ENCODE measurements at regions of chr16 and their contacts with region 1.

Region 1: GRCh38 chr16:24010440-24011089 is 174.8 kb downstream of the PRKCB start:
- DNase-seq: peak; percentile 75 to 81 (median 76)
- H3K4me3 ChIP-seq: no peak overlapping the region
- H3K4me3 Mint-ChIP-seq: peak overlapping the region in 2 of 8 donors; percentile 26 to 41
- H3K27ac ChIP-seq: no peak overlapping the region
- H3K27ac Mint-ChIP-seq: peak overlapping the region in 5 of 7 donors; percentile 28 to 76 (median 46)
- H3K4me1 ChIP-seq: peaks cover 50% of the 10 kb centered on the region
- H3K4me1 Mint-ChIP-seq: peaks cover 47 to 81% (median 62%) of the 10 kb centered on the region in 4 donors
- H3K27me3 ChIP-seq: no peaks in the 10 kb centered on the region
- H3K27me3 Mint-ChIP-seq: no peaks in the 10 kb centered on the region

Region 2: DNA sequence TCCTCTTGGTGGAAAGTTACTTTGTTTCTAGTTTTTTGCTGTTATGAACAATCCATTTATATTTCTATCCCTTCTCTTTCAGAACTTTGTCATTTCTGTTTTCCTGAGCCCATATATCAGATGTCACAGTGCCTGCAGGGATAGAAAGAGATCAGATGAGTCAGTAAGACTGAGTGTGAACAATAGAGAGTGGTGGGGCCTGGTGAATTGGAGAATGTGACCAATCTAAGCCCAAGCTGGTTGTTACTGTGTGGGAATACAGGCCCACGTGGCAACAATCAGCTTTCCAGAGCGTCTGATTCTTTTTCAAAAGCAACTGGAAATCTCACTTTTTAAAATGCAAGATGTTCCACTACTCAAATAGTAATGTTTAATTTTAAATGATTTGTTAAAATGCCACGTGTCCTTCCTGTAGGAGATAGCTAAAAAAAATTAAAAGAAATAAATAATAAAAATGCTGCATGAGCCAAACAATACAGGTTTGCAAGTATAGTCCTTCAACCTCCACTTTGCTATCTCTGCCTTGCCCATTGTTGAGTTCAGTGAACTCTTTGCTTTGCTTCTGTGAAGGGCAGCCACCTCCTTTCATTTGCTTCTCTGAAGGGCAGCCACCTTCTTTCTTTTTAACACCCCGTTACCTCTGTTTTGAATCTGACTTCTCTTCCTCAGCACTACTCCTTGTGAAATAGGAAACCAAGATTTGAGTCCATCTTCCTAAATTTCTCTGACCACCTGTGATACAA is 359.7 kb before region 1 on chr16:
- CTCF ChIA-PET with region 1: no interaction called
- POLR2A ChIA-PET with region 1: no interaction called
- intact Hi-C with region 1: no loop called
- DNase-seq: no peak
- H3K4me3 ChIP-seq: no peak overlapping the region
- H3K4me3 Mint-ChIP-seq: no peak overlapping the region
- H3K27ac ChIP-seq: no peak overlapping the region
- H3K27ac Mint-ChIP-seq: peak overlapping the region in 3 of 7 donors; percentile 6 to 77 (median 38)
- H3K4me1 ChIP-seq: no peaks in the 10 kb centered on the region
- H3K4me1 Mint-ChIP-seq: peaks cover 23 to 38% (median 29%) of the 10 kb centered on the region in 4 donors
- H3K27me3 ChIP-seq: no peaks in the 10 kb centered on the region
- H3K27me3 Mint-ChIP-seq: no peaks in the 10 kb centered on the region

Region 3: DNA sequence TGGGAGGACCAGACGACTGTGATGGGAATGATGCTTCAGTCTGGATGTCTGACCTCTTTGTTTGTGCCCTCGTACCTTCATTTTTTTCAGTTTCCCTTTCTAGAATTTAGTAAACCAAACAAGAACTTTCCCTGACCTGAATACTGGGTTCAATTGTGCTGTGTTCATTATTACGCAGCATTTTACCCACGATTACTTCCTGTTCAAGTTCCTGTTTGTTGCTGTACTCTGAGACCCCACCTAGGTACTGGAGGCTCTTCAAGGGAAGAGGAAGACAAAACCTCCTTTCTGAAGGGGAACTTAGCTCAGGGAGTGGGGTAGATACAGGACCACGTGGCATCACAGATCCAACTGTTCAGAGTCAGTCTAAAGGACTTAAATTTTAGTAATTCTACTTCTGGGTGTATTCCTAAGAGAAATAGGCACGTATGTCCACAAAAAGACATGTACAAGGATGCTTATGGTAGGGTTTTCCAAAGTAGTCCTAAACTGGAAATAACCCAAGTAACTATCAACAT is 184.0 kb before region 1 on chr16:
- CTCF ChIA-PET with region 1: interaction called, 18 read pairs
- POLR2A ChIA-PET with region 1: interaction called, 7 read pairs
- intact Hi-C with region 1: loop called (anchors 1 kb)
- DNase-seq: peak; percentile 58 to 78 (median 73)
- H3K4me3 ChIP-seq: peak overlapping the region; percentile 0 to 20
- H3K4me3 Mint-ChIP-seq: peak overlapping the region; percentile 55 to 84 (median 65)
- H3K27ac ChIP-seq: peak overlapping the region; percentile 36
- H3K27ac Mint-ChIP-seq: peak overlapping the region; percentile 88 to 97 (median 89)
- H3K4me1 ChIP-seq: peaks cover 40% of the 10 kb centered on the region
- H3K4me1 Mint-ChIP-seq: peaks cover 30 to 44% (median 36%) of the 10 kb centered on the region in 4 donors
- H3K27me3 ChIP-seq: no peaks in the 10 kb centered on the region
- H3K27me3 Mint-ChIP-seq: no peaks in the 10 kb centered on the region

Region 4: GRCh38 chr16:23858542-23858941 is 152.0 kb before region 1 on chr16:
- CTCF ChIA-PET with region 1: interaction called, 10 read pairs
- POLR2A ChIA-PET with region 1: interaction called, 4 read pairs
- intact Hi-C with region 1: loop called (anchors 5 kb)
- DNase-seq: no peak
- H3K4me3 ChIP-seq: no peak overlapping the region
- H3K4me3 Mint-ChIP-seq: peak overlapping the region in 2 of 8 donors; percentile 44 to 45
- H3K27ac ChIP-seq: no peak overlapping the region
- H3K27ac Mint-ChIP-seq: peak overlapping the region in 4 of 7 donors; percentile 32 to 74 (median 52)
- H3K4me1 ChIP-seq: peaks cover 83% of the 10 kb centered on the region
- H3K4me1 Mint-ChIP-seq: peaks cover 64 to 90% (median 79%) of the 10 kb centered on the region in 4 donors
- H3K27me3 ChIP-seq: no peaks in the 10 kb centered on the region
- H3K27me3 Mint-ChIP-seq: no peaks in the 10 kb centered on the region

Region 5: GRCh38 chr16:23877107-23878090 is 133.2 kb before region 1 on chr16:
- CTCF ChIA-PET with region 1: interaction called, 106 read pairs
- POLR2A ChIA-PET with region 1: interaction called, 8 read pairs
- intact Hi-C with region 1: loop called (anchors 1 kb)
- DNase-seq: peak in 2 of 5 donors; percentile 17 to 24
- H3K4me3 ChIP-seq: no peak overlapping the region
- H3K4me3 Mint-ChIP-seq: no peak overlapping the region
- H3K27ac ChIP-seq: no peak overlapping the region
- H3K27ac Mint-ChIP-seq: peak overlapping the region in 5 of 7 donors; percentile 11 to 65 (median 50)
- H3K4me1 ChIP-seq: peaks cover 62% of the 10 kb centered on the region
- H3K4me1 Mint-ChIP-seq: peaks cover 45 to 73% (median 56%) of the 10 kb centered on the region in 4 donors
- H3K27me3 ChIP-seq: no peaks in the 10 kb centered on the region
- H3K27me3 Mint-ChIP-seq: no peaks in the 10 kb centered on the region

Region 6: DNA sequence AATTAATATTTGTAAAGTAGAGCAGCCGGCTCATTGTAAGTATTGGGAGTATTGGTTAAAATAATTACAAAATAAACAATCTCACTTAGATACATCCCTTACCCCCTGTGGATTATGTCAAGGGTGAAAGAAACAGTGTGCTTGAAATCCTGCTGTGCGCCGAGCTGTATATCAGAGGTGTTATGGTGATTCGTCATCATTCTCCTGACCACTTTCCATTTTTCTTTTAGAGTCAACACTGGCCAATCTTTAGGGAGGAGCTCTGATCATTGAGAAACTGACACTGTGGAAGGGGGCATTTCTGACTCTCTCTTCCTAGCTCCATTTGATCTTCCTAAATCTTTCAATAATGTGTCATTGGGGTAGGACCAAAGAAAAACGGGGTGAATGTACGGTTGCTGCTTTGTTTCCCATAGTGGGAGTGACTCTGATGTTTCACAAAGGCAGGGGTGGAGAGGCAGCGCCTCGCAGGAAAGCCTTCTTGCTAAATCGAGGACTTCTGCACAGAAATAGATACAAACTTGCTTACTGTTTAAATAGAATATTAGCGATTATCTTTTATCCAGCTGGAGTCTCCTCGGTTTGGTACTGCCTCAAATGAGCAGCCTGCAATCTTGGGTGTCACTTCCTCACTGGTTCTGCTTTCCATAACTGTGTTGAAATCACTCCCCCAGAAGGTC is 51.4 kb before region 1 on chr16:
- CTCF ChIA-PET with region 1: interaction called, 13 read pairs
- POLR2A ChIA-PET with region 1: no interaction called
- intact Hi-C with region 1: no loop called
- DNase-seq: no peak
- H3K4me3 ChIP-seq: no peak overlapping the region
- H3K4me3 Mint-ChIP-seq: peak overlapping the region; percentile 18 to 90 (median 67)
- H3K27ac ChIP-seq: no peak overlapping the region
- H3K27ac Mint-ChIP-seq: peak overlapping the region; percentile 33 to 93 (median 81)
- H3K4me1 ChIP-seq: peaks cover 60% of the 10 kb centered on the region
- H3K4me1 Mint-ChIP-seq: peaks cover 64 to 83% (median 73%) of the 10 kb centered on the region in 4 donors
- H3K27me3 ChIP-seq: no peaks in the 10 kb centered on the region
- H3K27me3 Mint-ChIP-seq: no peaks in the 10 kb centered on the region

Region 7: DNA sequence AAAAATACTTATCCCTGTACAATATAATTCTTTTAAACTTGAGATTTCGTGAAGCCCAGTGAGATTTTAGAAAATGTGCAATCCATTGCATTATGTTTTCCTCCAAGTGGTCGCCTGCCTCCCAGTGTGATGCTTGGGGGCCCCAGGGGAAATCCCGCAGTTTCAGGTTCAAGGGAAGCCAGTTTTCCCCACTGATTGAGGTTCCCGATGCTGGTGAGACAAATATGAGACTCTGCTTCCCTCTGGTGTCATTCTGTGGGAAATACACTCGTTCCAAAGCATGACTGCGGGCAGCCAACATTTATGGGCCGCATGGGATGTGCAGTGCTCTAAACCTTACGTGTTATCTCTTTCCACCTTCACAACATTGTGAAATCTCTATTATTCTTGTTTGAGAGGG is 26.0 kb after region 1 on chr16:
- CTCF ChIA-PET with region 1: interaction called, 30 read pairs
- POLR2A ChIA-PET with region 1: interaction called, 6 read pairs
- intact Hi-C with region 1: loop called (anchors 1 kb)
- DNase-seq: peak in 4 of 5 donors; percentile 28 to 52 (median 34)
- H3K4me3 ChIP-seq: no peak overlapping the region
- H3K4me3 Mint-ChIP-seq: peak overlapping the region in 4 of 8 donors; percentile 9 to 91 (median 47)
- H3K27ac ChIP-seq: no peak overlapping the region
- H3K27ac Mint-ChIP-seq: peak overlapping the region in 5 of 7 donors; percentile 4 to 86 (median 59)
- H3K4me1 ChIP-seq: peaks cover 42% of the 10 kb centered on the region
- H3K4me1 Mint-ChIP-seq: peaks cover 32 to 59% (median 49%) of the 10 kb centered on the region in 4 donors
- H3K27me3 ChIP-seq: no peaks in the 10 kb centered on the region
- H3K27me3 Mint-ChIP-seq: no peaks in the 10 kb centered on the region

Region 8: DNA sequence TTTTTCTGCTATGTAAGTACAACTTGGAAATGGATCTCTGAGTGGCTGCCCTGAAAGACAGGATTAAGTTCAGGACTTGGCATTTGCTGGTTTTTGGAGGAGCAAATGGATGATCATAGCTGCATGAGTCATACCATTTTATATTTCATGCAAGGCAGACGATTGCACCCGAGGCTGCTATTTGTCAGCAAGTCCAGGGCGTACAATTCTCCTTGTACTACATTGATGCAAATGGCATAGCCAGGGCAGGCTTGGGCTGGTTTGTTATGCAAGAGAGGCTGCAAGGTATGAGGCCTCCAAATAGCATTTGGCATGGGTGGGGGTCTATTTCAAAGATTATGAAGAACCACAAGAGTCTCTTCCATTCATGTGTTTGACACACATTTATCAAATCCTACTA is 164.4 kb after region 1 on chr16:
- CTCF ChIA-PET with region 1: no interaction called
- POLR2A ChIA-PET with region 1: no interaction called
- intact Hi-C with region 1: no loop called
- DNase-seq: no peak
- H3K4me3 ChIP-seq: no peak overlapping the region
- H3K4me3 Mint-ChIP-seq: no peak overlapping the region
- H3K27ac ChIP-seq: no peak overlapping the region
- H3K27ac Mint-ChIP-seq: no peak overlapping the region
- H3K4me1 ChIP-seq: no peaks in the 10 kb centered on the region
- H3K4me1 Mint-ChIP-seq: peaks cover 0 to 3% (median 0%) of the 10 kb centered on the region in 4 donors
- H3K27me3 ChIP-seq: no peaks in the 10 kb centered on the region
- H3K27me3 Mint-ChIP-seq: no peaks in the 10 kb centered on the region